Activated naive CD4-positive, alpha-beta T cell treated with anti-CD3 and anti-CD28 coated beads for 36 hours (primary cell): ENCODE measurements at regions of chr11 and their contacts with region 1.

Region 1: GRCh38 chr11:121464352-121464946 is 11.7 kb upstream of the SORL1-AS1 start:
- DNase-seq: peak; percentile 94
- H3K4me3 Mint-ChIP-seq: peak overlapping the region; percentile 65
- H3K27ac Mint-ChIP-seq: peak overlapping the region; percentile 96
- H3K4me1 Mint-ChIP-seq: peaks cover 96% of the 10 kb centered on the region
- H3K27me3 Mint-ChIP-seq: no peaks in the 10 kb centered on the region

Region 2: DNA sequence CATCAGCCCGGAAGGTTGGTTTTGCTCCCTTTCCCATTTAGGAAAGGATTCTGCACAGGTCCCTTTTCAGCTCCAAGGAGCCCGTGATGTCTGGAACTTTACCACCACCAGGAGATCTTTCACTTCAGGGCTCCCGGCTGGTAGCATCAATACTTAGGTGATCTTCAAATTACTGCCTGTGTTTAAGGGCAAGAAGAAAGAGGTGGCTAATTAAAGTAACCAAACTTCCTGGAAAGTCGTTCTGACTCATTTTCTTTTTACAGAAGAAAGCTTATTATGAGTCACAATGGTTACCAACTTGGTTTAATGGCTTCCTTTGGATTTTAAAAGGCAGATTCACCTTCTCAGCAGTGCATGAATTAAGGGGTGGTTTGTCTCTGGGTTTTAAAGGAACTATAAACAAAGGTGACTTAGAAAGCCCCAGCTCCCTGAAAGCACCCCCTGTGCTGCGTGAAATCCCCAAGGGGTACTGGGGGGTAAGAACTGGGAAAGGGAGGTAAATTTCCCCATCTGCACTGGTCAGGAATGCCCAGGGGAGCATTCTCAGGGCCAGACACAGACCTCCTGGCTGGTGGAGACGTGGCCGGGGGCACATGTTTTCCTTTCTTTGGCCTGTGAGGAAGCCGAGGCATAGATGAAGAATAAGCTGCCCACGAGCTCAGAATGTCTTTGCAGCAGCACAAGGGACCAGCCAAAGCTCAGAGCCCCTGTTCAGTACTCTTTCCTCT is 1215.7 kb before region 1 on chr11:
- CTCF ChIA-PET with region 1: no interaction called
- intact Hi-C with region 1: loop called (anchors 10 kb)
- DNase-seq: peak; percentile 42
- H3K4me3 Mint-ChIP-seq: no peak overlapping the region
- H3K27ac Mint-ChIP-seq: peak overlapping the region; percentile 78
- H3K4me1 Mint-ChIP-seq: peaks cover 42% of the 10 kb centered on the region
- H3K27me3 Mint-ChIP-seq: peaks cover 64% of the 10 kb centered on the region

Region 3: GRCh38 chr11:121179306-121179705 is 285.1 kb before region 1 on chr11:
- CTCF ChIA-PET with region 1: no interaction called
- intact Hi-C with region 1: no loop called
- DNase-seq: no peak
- H3K4me3 Mint-ChIP-seq: no peak overlapping the region
- H3K27ac Mint-ChIP-seq: no peak overlapping the region
- H3K4me1 Mint-ChIP-seq: no peaks in the 10 kb centered on the region
- H3K27me3 Mint-ChIP-seq: peaks cover 6% of the 10 kb centered on the region

Region 4: GRCh38 chr11:121352251-121352891 is 112.1 kb before region 1 on chr11:
- CTCF ChIA-PET with region 1: no interaction called
- intact Hi-C with region 1: no loop called
- DNase-seq: no peak
- H3K4me3 Mint-ChIP-seq: no peak overlapping the region
- H3K27ac Mint-ChIP-seq: no peak overlapping the region
- H3K4me1 Mint-ChIP-seq: no peaks in the 10 kb centered on the region
- H3K27me3 Mint-ChIP-seq: no peaks in the 10 kb centered on the region

Region 5: GRCh38 chr11:121414141-121414913 is 50.1 kb before region 1 on chr11:
- CTCF ChIA-PET with region 1: no interaction called
- intact Hi-C with region 1: loop called (anchors 2 kb)
- DNase-seq: no peak
- H3K4me3 Mint-ChIP-seq: no peak overlapping the region
- H3K27ac Mint-ChIP-seq: no peak overlapping the region
- H3K4me1 Mint-ChIP-seq: peaks cover 58% of the 10 kb centered on the region
- H3K27me3 Mint-ChIP-seq: no peaks in the 10 kb centered on the region

Region 6: GRCh38 chr11:121451986-121452608 is 12.4 kb before region 1 on chr11 and contains the start of gene SORL1:
- CTCF ChIA-PET with region 1: interaction called, 46 read pairs
- intact Hi-C with region 1: loop called (anchors 1 kb)
- DNase-seq: peak; percentile 86
- H3K4me3 Mint-ChIP-seq: peak within 1 kb of the TSS; percentile 87
- H3K27ac Mint-ChIP-seq: peak within 1 kb of the TSS; percentile 92
- H3K4me1 Mint-ChIP-seq: peaks cover 81% of the 10 kb centered on the region
- H3K27me3 Mint-ChIP-seq: no peaks in the 10 kb centered on the region
- total RNA-seq, gene SORL1: 66.8 to 67.2 TPM

Region 7: DNA sequence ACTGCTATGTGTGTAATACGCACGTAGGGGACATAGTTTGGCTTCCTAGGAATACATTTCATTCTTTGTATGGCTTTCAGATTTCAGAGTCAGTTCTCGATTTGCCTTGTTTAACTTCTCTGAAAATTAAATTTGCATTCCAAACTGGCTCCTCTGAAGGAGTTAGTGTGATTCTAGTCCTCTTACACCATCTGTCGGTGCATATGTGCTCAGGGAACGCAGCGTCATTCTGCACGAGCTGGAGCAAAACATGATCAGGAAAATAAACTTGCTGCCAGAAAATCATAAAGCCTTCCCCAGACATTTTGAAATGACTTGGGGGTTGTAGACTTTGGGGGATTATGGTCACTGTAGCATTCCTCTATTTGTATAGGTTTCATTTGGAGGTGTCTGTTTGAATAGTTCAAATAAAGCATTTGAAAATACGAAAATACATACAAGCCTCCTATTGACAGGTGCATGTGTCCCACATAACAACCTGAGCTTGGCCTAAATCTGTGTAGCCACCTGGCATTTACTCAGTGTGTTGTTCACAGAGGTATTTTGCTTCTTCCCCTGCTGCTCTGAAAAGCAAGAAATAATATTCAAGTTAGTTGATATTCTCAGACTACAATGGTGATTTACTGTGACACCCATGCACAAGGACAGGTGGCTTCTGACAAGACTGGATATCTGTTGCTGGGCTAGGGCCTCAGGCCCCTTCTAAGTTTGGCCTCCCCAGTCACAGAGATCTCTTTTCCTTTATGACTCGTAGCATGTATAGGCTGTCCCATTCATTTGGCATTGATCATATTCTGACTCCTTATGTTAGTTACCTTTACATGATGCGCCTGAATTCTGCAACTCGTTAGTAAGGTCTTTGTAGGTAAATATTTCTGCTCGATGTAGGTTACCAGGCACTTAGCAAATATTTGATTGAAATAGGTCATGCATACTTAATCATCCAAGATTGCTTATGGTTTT is 70.0 kb after region 1 on chr11:
- CTCF ChIA-PET with region 1: interaction called, 6 read pairs
- intact Hi-C with region 1: loop called (anchors 1 kb)
- DNase-seq: no peak
- H3K4me3 Mint-ChIP-seq: no peak overlapping the region
- H3K27ac Mint-ChIP-seq: no peak overlapping the region
- H3K4me1 Mint-ChIP-seq: peaks cover 60% of the 10 kb centered on the region
- H3K27me3 Mint-ChIP-seq: no peaks in the 10 kb centered on the region

Region 8: GRCh38 chr11:121655537-121656327 is 191.3 kb after region 1 on chr11:
- CTCF ChIA-PET with region 1: no interaction called
- intact Hi-C with region 1: no loop called
- DNase-seq: peak; percentile 82
- H3K4me3 Mint-ChIP-seq: peak overlapping the region; percentile 74
- H3K27ac Mint-ChIP-seq: peak overlapping the region; percentile 26
- H3K4me1 Mint-ChIP-seq: peaks cover 22% of the 10 kb centered on the region
- H3K27me3 Mint-ChIP-seq: peaks cover 6% of the 10 kb centered on the region

Region 9: GRCh38 chr11:122673701-122674100 is 1209.3 kb after region 1 on chr11:
- CTCF ChIA-PET with region 1: no interaction called
- intact Hi-C with region 1: loop called (anchors 5 kb)
- DNase-seq: no peak
- H3K4me3 Mint-ChIP-seq: no peak overlapping the region
- H3K27ac Mint-ChIP-seq: no peak overlapping the region
- H3K4me1 Mint-ChIP-seq: peaks cover 68% of the 10 kb centered on the region
- H3K27me3 Mint-ChIP-seq: no peaks in the 10 kb centered on the region

Region 10: GRCh38 chr11:122853971-122854446 is 1389.6 kb after region 1 on chr11:
- CTCF ChIA-PET with region 1: no interaction called
- intact Hi-C with region 1: loop called (anchors 10 kb)
- DNase-seq: peak; percentile 74
- H3K4me3 Mint-ChIP-seq: no peak overlapping the region
- H3K27ac Mint-ChIP-seq: no peak overlapping the region
- H3K4me1 Mint-ChIP-seq: peaks cover 47% of the 10 kb centered on the region
- H3K27me3 Mint-ChIP-seq: no peaks in the 10 kb centered on the region